ENCODE measurements at regions of chr3 and their contacts with region 1.

Region 1: DNA sequence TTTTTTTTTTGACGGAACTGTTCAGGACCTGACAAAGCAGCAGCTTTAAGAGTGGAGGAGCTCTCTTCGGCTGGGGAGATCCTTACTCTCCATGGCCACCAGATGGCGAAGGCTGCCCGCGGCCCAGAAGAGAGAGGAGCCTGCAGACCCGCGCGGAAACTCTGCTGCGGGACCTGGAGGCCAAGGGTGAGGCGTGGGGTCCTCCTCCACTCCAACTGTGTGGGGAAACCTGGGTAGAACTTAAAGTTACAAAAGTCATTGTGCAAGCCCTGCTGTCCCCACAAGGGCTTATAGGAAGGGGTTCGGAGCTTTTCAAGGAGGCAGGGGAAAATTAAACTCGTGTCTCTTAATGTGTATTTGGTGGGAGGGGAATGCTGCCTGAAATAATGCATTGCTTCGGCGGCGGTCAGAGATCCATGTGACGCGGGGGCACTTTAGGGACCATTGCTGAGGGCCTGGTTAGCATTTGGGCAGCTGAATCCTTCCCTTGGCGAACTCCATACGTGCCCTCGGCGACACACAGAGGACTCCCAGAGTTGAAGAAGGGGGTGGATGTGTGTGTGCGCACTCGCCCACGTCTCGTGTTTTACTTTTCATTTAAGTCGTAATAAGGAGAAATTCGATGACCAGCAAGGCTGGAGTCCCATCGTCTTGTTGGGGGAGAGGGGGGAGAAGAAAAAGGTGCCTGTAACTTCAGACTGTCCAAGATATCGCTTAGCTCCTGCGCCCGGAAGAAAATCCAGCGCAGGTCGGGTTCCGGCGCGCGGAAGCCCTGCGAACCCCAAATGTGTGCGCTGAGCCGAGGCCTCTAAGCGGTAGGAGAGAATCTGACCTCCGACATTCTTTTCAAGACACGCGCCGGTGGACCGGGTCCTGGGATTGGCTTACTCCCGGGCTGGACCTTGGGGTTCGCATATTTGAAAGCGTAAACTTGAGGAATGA is 9.7 kb downstream of the EOMES start:
- DNase-seq: peak; percentile 75
- ATAC-seq: peak; percentile 92
- H3K4me3 ChIP-seq: peak overlapping the region; percentile 39
- H3K27ac ChIP-seq: no peak overlapping the region
- H3K4me1 ChIP-seq: peaks cover 6% of the 10 kb centered on the region; the same call in 1 of the 2 replicates
- H3K27me3 ChIP-seq: peaks cover 61% of the 10 kb centered on the region
- CTCF ChIP-seq: peak; percentile 78
- POLR2A ChIP-seq: no peak
- RAD21 ChIP-seq: peak; percentile 80

Region 2: GRCh38 chr3:27779176-27779575 is 66.8 kb after region 1 on chr3:
- CTCF ChIA-PET with region 1: no interaction called
- POLR2A ChIA-PET with region 1: no interaction called
- dilution Hi-C with region 1: no loop called
- in situ Hi-C with region 1: no loop called
- intact Hi-C with region 1: no loop called
- DNase-seq: no peak
- ATAC-seq: no peak
- H3K4me3 ChIP-seq: no peak overlapping the region
- H3K27ac ChIP-seq: no peak overlapping the region
- H3K4me1 ChIP-seq: no peaks in the 10 kb centered on the region
- H3K27me3 ChIP-seq: peaks cover 3% of the 10 kb centered on the region; the same call in 1 of the 2 replicates
- CTCF ChIP-seq: no peak
- POLR2A ChIP-seq: no peak
- RAD21 ChIP-seq: no peak

Region 3: GRCh38 chr3:28241221-28242160 is 529.1 kb after region 1 on chr3 and contains the start of gene CMC1:
- CTCF ChIA-PET with region 1: no interaction called
- POLR2A ChIA-PET with region 1: no interaction called
- dilution Hi-C with region 1: no loop called
- in situ Hi-C with region 1: no loop called
- intact Hi-C with region 1: loop called (anchors 5 kb)
- DNase-seq: peak; percentile 94
- ATAC-seq: peak; percentile 100
- H3K4me3 ChIP-seq: peak within 1 kb of the TSS; percentile 75
- H3K27ac ChIP-seq: peak within 1 kb of the TSS; percentile 75
- H3K4me1 ChIP-seq: no peaks in the 10 kb centered on the region
- H3K27me3 ChIP-seq: no peaks in the 10 kb centered on the region
- CTCF ChIP-seq: no peak
- POLR2A ChIP-seq: peak; percentile 77
- RAD21 ChIP-seq: no peak
- total RNA-seq, gene CMC1: 1.6 and 2.8 TPM in 2 replicates

Region 4: GRCh38 chr3:28286595-28286994 is 574.2 kb after region 1 on chr3:
- CTCF ChIA-PET with region 1: interaction called, 8 read pairs
- POLR2A ChIA-PET with region 1: no interaction called
- dilution Hi-C with region 1: no loop called
- in situ Hi-C with region 1: no loop called
- intact Hi-C with region 1: loop called (anchors 1 kb)
- DNase-seq: peak; percentile 46
- ATAC-seq: peak; percentile 93
- H3K4me3 ChIP-seq: no peak overlapping the region
- H3K27ac ChIP-seq: no peak overlapping the region
- H3K4me1 ChIP-seq: no peaks in the 10 kb centered on the region
- H3K27me3 ChIP-seq: no peaks in the 10 kb centered on the region
- CTCF ChIP-seq: peak; percentile 58
- POLR2A ChIP-seq: no peak
- RAD21 ChIP-seq: peak; percentile 60

Region 5: DNA sequence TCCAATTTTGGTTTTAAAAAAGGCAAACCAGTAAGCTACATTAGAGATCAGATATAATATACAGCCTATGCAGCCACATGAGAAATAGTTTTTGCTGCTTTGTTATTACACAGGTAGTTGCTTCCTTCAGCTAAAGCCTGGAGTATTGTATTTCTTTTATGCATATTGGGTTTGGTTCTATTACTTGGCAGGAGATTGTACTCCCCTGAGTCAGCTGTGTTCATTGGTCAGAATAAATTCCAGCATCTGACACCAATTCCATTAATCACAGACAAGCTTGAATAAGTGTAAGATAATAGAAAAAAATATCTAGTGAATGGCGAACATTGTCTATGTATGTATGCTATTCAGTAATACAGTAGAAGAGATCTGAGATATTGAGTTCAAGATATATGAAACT is 610.1 kb after region 1 on chr3:
- CTCF ChIA-PET with region 1: interaction called, 13 read pairs
- POLR2A ChIA-PET with region 1: no interaction called
- dilution Hi-C with region 1: no loop called
- in situ Hi-C with region 1: loop called (anchors 5 kb)
- intact Hi-C with region 1: no loop called
- DNase-seq: peak; percentile 66
- ATAC-seq: peak; percentile 44
- H3K4me3 ChIP-seq: no peak overlapping the region
- H3K27ac ChIP-seq: no peak overlapping the region
- H3K4me1 ChIP-seq: no peaks in the 10 kb centered on the region
- H3K27me3 ChIP-seq: no peaks in the 10 kb centered on the region
- CTCF ChIP-seq: no peak
- POLR2A ChIP-seq: no peak
- RAD21 ChIP-seq: no peak

Region 6: GRCh38 chr3:28328188-28329151 is 616.1 kb after region 1 on chr3:
- CTCF ChIA-PET with region 1: interaction called, 13 read pairs
- POLR2A ChIA-PET with region 1: no interaction called
- dilution Hi-C with region 1: no loop called
- in situ Hi-C with region 1: loop called (anchors 5 kb)
- intact Hi-C with region 1: loop called (anchors 1 kb)
- DNase-seq: peak; percentile 33
- ATAC-seq: peak; percentile 82
- H3K4me3 ChIP-seq: no peak overlapping the region
- H3K27ac ChIP-seq: no peak overlapping the region
- H3K4me1 ChIP-seq: no peaks in the 10 kb centered on the region
- H3K27me3 ChIP-seq: no peaks in the 10 kb centered on the region
- CTCF ChIP-seq: peak; percentile 66
- POLR2A ChIP-seq: no peak
- RAD21 ChIP-seq: peak; percentile 60

Measured in IMR-90 (cell line).